ENCODE measurements at regions of chr7 and their contacts with region 1.

Region 1: DNA sequence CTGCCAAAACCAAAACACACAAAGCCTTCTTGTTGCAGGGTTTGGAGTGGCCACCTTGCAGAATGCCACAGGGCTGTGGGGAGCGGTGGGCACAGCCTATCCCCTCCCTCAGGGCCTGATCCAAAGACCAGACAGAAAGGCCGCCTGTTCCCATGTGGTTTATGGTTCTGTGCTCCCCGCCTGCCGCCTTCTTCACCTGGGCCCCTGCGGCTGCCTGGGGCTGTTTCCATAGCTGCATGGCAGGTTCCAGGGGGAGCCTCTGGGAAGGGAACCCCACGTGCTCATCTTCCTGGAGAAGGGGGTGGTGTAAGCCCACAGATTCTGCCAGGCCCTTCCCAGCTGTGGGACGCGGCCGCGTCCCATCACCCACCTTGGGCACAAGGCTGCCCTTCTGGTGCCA is 70.7 kb upstream of the EZH2 start:
- DNase-seq: no peak
- ATAC-seq: no peak
- H3K4me3 ChIP-seq: no peak overlapping the region
- H3K27ac ChIP-seq: no peak overlapping the region
- H3K4me1 ChIP-seq: no peaks in the 10 kb centered on the region
- H3K27me3 ChIP-seq: no peaks in the 10 kb centered on the region
- CTCF ChIP-seq: no peak
- POLR2A ChIP-seq: no peak

Region 2: GRCh38 chr7:148867596-148868377 is 87.0 kb before region 1 on chr7:
- intact Hi-C with region 1: loop called in 1 of 10 experiments (anchors 5 kb)
- DNase-seq: no peak
- ATAC-seq: no peak
- H3K4me3 ChIP-seq: no peak overlapping the region
- H3K27ac ChIP-seq: peak overlapping the region in 1 of 12 donors; percentile 34
- H3K4me1 ChIP-seq: peaks cover 0 to 9% (median 0%) of the 10 kb centered on the region in 12 donors
- H3K27me3 ChIP-seq: no peaks in the 10 kb centered on the region
- CTCF ChIP-seq: no peak
- POLR2A ChIP-seq: no peak